ENCODE measurements at regions of chr18 and their contacts with region 1.

Region 1: DNA sequence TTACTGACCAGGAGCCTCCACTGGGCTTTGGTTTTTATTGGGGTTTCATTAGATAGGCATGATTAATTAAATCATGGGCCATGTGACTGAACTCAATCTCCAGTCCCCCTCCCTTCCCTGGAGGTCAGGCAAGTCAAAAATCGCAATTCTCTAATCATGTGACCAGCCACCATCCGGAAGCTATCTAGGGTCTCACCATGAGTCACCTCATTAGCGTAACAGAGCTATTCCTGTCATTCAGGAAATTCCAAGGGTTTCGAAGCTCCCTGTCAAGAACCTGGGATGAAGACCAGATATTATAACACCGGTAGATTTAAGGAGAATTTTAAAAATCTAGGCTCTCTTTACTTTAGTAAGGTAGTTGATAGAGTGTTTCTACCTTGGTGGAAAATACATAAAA is 180.3 kb upstream of the TCF4 start:
- DNase-seq: no peak
- H3K4me3 ChIP-seq: no peak overlapping the region
- H3K27ac ChIP-seq: no peak overlapping the region
- H3K27me3 ChIP-seq: no peaks in the 10 kb centered on the region
- CTCF ChIP-seq: no peak

Region 2: DNA sequence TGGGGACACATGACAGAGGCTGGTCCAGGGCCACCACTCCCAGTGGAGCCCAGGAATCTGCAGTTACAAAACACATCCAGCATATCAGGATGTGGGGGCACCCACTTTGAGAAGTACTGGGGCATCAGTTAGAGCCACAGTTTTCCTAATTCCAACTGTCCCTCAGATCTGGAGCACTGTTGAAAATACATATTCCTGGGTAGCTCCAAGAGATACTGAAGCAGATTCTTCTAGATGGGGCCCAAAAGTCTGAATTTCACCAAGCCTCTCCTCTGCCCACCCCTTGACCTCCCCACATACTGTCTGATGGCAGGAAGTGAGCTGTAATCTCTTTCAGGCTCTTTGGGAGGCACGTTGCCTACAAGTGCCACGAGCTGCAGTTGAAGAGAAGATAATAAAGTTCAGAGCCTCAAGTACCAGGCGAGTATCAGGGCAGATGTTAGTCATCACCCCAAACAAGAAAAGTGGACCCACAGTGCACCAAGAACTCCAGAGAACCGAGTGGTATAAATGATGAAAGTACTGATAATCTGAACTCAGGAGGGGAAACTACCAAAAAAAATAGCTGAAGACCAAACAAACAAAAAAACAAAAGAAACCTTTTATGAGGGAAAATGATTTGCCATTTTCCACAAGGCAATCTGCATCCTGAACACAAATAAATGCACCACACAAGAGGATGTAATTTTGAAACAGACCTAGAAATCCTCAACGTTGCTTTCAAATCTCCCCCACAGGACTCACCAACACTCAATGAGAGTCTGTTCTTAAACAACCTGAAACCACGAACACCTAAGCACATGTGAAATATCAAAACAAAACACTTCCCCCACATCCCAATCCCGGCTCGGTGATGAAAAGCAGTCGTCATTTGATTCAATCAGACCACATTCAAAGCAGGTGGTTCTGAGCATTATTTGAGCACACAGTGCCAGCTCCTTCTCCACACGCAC is 278.9 kb before region 1 on chr18:
- intact Hi-C with region 1: no loop called
- DNase-seq: peak in 1 of 10 donors; percentile 31
- H3K4me3 ChIP-seq: peak overlapping the region in 21 of 59 donors; percentile 2 to 37 (median 16)
- H3K27ac ChIP-seq: peak overlapping the region in 28 of 59 donors; percentile 4 to 61 (median 26)
- H3K27me3 ChIP-seq: no peaks in the 10 kb centered on the region
- CTCF ChIP-seq: no peak

Region 3: DNA sequence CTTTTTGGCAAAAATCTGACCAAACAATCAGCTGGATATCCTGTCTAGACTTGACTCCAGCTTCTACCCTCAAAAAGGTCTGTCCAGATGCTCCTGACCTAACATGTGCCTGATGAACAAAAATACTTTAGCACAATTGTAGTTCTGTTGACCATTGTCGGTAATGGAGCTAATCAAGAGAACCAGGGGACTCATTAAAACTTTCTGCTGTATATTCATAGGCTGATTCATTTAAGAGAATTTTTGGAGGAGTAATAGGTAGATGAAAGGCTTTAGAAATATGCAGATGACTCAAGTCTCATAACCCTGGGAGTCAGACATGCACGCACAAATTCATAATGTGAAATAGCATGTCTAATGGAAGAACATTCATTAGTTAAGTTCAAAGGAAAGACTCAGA is 355.9 kb after region 1 on chr18:
- intact Hi-C with region 1: loop called in 1 of 2 experiments (anchors 5 kb)
- DNase-seq: no peak
- H3K4me3 ChIP-seq: no peak overlapping the region
- H3K27ac ChIP-seq: no peak overlapping the region
- H3K27me3 ChIP-seq: no peaks in the 10 kb centered on the region
- CTCF ChIP-seq: no peak